ENCODE measurements at regions of chr12 and their contacts with region 1.

Region 1: DNA sequence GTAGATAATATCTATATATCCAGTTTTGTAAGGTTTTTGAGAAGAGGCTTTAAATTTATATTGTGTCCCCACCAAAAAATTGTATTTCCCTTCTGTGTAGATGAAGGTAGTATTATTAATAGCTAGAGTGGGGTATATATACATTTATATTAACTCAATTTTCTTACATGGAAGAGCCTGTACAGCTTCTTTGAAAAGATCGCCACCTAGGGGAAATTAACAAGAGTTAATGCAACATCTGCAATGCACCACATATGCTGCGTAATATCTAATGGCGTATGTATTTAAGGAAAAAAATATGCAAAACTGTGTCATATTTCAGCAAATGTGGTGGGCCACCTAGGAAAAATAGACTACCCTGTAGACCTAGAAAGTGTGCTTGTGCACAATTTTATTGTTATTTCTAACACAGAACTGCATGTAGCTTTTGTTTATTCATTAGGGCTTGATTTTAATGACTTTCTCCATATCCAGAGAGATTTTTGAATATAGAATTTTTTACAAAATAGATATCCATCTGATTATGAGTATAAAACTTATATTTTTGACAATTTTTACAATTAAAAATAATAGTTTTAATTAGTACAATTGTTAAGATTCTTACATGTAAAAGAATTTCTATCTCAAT is 14.0 kb downstream of the CCER1 start:
- DNase-seq: peak; percentile 75
- H3K4me3 ChIP-seq: no peak overlapping the region
- H3K27ac ChIP-seq: no peak overlapping the region
- H3K4me1 ChIP-seq: peaks cover 18% of the 10 kb centered on the region
- H3K27me3 ChIP-seq: no peaks in the 10 kb centered on the region
- CTCF ChIP-seq: peak; percentile 38 to 47
- POLR2A ChIP-seq: no peak

Region 2: DNA sequence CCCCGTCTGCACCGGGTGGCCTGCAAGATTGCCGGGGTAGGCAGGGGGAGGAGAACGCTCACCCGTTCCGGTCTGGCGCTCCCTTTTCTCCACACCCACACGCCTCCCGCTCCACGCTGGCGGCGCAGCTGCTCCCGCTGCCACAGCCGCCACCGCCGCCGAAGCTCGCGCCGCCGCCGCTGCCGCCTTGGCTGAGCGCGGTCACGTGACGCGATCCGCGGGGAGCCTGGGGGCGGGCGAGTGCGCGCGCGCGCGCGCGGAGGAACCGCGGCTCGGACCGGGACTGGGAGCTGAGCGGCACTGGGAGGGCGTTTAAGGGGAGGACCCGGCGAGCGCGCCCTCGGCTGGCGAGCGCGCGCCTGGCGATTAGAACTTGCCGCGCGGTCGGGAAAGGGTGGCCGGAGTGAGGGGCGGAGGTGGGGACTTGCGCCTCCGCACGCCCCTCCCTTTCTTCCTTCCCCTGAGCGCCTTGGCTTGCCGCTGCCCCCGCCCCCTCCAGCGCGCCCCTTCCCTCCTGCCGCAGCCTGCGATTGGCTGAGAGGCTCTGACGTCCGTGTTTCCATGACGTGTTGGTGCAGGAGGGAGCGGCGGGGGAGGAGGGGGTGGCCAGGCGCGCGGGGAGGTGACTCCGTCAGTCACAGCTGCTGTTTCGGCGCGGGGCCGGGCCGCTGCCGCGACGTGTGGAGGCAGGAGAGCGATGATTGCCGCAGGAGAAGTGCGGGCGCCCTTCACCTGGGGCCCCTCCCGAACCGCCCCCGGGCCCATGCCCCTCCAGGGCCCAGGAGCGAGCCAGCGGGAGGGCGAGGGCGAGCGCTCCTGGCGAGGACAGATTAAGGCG is 1231.6 kb before region 1 on chr12:
- CTCF ChIA-PET with region 1: interaction called, 5 read pairs
- POLR2A ChIA-PET with region 1: no interaction called
- dilution Hi-C with region 1: no loop called
- intact Hi-C with region 1: loop called (anchors 2 kb)
- DNase-seq: peak; percentile 99
- H3K4me3 ChIP-seq: peak overlapping the region; percentile 48 to 75 (median 73)
- H3K27ac ChIP-seq: peak overlapping the region; percentile 67
- H3K4me1 ChIP-seq: peaks cover 12% of the 10 kb centered on the region
- H3K27me3 ChIP-seq: peaks cover 0 to 16% of the 10 kb centered on the region in 2 experiments
- CTCF ChIP-seq: peak in 1 of 2 donors; percentile 16
- POLR2A ChIP-seq: no peak

Region 3: DNA sequence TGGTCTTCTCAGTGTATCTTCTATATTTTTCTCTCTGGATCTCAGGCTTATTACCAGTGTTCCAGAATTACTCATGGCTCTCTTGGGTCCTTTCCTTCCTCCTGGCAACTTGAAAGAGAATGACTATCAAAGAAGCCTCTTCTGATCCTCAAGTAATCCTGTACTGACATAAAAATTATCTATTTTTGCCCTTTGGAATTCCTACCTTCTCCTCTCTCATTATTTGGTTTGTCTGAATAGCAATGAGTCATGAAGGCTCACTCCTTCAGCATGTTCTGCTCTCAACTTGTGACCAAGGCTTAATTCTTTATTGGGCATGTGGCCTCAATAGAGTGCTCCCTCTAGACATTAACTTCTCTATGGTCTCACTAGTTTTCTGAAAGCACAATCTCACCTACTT is 678.7 kb before region 1 on chr12:
- CTCF ChIA-PET with region 1: no interaction called
- POLR2A ChIA-PET with region 1: no interaction called
- dilution Hi-C with region 1: no loop called
- intact Hi-C with region 1: no loop called
- DNase-seq: no peak
- H3K4me3 ChIP-seq: no peak overlapping the region
- H3K27ac ChIP-seq: no peak overlapping the region
- H3K4me1 ChIP-seq: no peaks in the 10 kb centered on the region
- H3K27me3 ChIP-seq: no peaks in the 10 kb centered on the region
- CTCF ChIP-seq: no peak
- POLR2A ChIP-seq: no peak

Region 4: DNA sequence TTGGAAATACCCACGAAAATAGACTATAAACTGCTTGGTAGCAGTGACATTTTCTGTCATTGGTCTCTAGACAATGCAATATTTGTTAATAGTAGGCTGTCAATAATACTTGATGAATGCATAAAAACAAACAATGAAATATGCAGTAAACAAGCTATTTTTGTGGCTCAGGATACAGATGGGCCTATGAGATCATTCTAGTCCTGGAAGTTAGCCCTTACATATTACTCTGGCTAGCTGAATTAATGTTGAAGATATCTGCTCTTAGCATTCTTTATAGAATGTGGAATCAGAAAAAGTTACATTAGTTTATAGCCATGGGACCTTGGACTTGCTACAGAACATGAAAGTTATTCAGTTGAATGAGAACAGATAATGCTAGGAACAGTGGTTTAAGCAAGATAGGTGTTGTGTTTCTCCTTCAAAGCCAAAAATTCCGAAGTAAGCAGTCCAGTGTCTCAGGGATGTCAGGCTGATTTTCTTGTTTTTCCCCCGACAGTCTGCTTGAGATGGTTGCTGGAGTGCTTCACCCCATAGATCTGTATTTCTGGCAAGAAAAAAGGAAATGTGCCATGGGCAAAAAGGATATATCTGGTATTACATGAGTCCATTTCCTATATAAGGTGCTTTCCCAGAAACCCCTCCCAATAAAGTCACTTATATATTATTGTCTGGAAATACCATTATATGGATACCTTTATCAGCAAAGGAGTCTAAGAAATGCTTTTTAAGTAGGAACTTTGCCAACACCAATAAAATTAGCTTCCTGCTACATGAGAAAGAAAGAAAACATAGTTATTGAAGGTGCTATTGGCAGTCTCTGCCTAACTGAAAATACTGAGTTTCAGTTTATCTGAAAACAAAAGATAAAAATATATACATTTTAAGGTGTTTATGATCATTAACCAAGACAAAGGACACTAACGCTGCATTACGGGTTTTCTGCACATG is 612.9 kb before region 1 on chr12:
- CTCF ChIA-PET with region 1: interaction called, 3 read pairs
- POLR2A ChIA-PET with region 1: no interaction called
- dilution Hi-C with region 1: no loop called
- intact Hi-C with region 1: loop called (anchors 5 kb)
- DNase-seq: peak; percentile 89
- H3K4me3 ChIP-seq: no peak overlapping the region
- H3K27ac ChIP-seq: peak overlapping the region; percentile 97
- H3K4me1 ChIP-seq: peaks cover 53% of the 10 kb centered on the region
- H3K27me3 ChIP-seq: no peaks in the 10 kb centered on the region
- CTCF ChIP-seq: no peak
- POLR2A ChIP-seq: no peak

Region 5: GRCh38 chr12:90741611-90742010 is 199.4 kb before region 1 on chr12:
- CTCF ChIA-PET with region 1: no interaction called
- POLR2A ChIA-PET with region 1: no interaction called
- dilution Hi-C with region 1: no loop called
- intact Hi-C with region 1: no loop called
- DNase-seq: no peak
- H3K4me3 ChIP-seq: no peak overlapping the region
- H3K27ac ChIP-seq: no peak overlapping the region
- H3K4me1 ChIP-seq: no peaks in the 10 kb centered on the region
- H3K27me3 ChIP-seq: no peaks in the 10 kb centered on the region
- CTCF ChIP-seq: no peak
- POLR2A ChIP-seq: no peak

Region 6: DNA sequence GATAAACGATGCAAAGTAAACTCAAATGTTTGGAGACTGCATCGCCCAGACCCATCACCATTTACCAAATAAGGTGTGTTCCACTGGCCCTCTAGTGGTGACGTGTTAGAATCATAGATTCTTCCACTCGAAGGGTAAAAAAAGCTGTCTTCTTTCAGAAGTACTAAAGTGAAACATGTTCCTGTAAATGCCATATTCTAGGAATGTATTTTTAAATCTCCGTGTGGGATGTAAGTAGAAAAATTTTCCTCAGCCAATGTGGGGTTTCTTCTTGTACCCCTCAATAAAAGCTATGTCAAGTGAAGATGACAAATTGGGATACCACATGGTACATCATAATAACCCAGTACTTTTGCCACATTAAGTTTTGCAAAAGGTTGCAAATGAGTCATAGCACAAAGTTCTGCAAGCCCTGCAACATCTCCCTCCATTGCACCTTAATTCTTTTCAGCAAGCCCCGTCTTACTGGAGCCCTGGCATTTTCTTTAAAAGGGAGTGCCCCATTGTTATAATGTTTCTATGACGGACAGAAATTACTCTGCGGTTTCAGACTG is 86.8 kb before region 1 on chr12:
- CTCF ChIA-PET with region 1: interaction called, 11 read pairs
- POLR2A ChIA-PET with region 1: no interaction called
- dilution Hi-C with region 1: no loop called
- intact Hi-C with region 1: no loop called
- DNase-seq: peak; percentile 60
- H3K4me3 ChIP-seq: no peak overlapping the region
- H3K27ac ChIP-seq: no peak overlapping the region
- H3K4me1 ChIP-seq: no peaks in the 10 kb centered on the region
- H3K27me3 ChIP-seq: no peaks in the 10 kb centered on the region
- CTCF ChIP-seq: peak; percentile 59 to 63
- POLR2A ChIP-seq: no peak

Region 7: DNA sequence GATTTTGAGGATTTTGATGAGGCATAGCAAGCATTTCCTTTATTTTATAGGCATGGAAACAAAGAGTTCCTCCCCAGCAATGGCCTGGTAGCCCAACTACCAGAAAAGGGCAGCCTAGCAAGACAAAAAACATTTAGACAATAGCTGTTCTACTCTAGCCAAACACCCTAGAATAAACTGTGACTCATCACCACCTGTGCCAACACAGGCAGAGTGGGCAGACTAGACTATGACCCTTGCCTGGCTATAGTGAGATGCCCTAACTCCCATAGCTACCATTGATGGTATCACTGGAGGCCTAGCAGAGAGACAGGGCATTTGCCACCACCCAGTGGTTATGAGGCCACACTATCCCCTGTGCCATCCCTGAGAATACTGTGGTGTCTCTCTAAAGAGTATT is 29.5 kb after region 1 on chr12:
- CTCF ChIA-PET with region 1: interaction called, 20 read pairs
- POLR2A ChIA-PET with region 1: no interaction called
- dilution Hi-C with region 1: no loop called
- intact Hi-C with region 1: no loop called
- DNase-seq: peak; percentile 84
- H3K4me3 ChIP-seq: no peak overlapping the region
- H3K27ac ChIP-seq: peak overlapping the region; percentile 4
- H3K4me1 ChIP-seq: peaks cover 11% of the 10 kb centered on the region
- H3K27me3 ChIP-seq: no peaks in the 10 kb centered on the region
- CTCF ChIP-seq: no peak
- POLR2A ChIP-seq: no peak

Region 8: DNA sequence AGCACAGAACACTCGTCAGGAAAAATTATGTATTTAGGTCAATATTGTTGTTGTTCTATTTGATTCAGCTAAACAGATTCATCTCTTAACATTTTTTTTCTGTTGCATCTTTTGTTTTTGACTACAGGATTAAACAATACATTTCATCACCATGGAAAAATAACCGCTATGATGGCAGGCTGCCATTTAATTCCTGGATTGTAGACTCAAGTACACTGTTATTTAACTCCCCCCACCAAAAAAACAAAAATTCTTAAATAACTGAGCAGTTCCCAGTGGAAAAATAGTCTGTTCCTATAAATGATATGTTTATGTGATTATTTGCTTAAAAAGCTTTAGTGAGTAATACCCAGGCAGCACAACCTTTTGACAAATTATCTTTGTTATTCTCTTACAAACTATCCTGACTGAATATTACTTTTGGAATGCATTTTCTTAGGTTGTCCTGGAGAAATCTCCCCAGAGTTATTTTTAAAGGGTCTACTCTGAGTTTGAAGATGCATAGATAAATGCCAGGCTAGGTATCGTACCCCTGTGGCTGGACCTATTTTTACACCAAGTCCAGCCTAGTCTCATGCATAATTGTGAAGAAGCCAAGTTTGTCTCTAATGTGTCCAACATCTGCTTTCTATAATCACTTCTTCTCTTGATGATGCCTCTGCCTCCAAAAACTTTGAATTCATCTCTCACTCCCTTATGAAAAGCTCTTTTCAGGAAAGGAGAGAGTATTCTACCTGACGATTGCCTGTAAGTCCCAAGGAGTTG is 113.1 kb after region 1 on chr12:
- CTCF ChIA-PET with region 1: no interaction called
- POLR2A ChIA-PET with region 1: no interaction called
- dilution Hi-C with region 1: no loop called
- intact Hi-C with region 1: no loop called
- DNase-seq: peak; percentile 94
- H3K4me3 ChIP-seq: no peak overlapping the region
- H3K27ac ChIP-seq: no peak overlapping the region
- H3K4me1 ChIP-seq: no peaks in the 10 kb centered on the region
- H3K27me3 ChIP-seq: no peaks in the 10 kb centered on the region
- CTCF ChIP-seq: no peak
- POLR2A ChIP-seq: no peak

Region 9: GRCh38 chr12:91332302-91332701 is 391.3 kb after region 1 on chr12:
- CTCF ChIA-PET with region 1: interaction called, 39 read pairs
- POLR2A ChIA-PET with region 1: no interaction called
- dilution Hi-C with region 1: no loop called
- intact Hi-C with region 1: no loop called
- DNase-seq: no peak
- H3K4me3 ChIP-seq: no peak overlapping the region
- H3K27ac ChIP-seq: no peak overlapping the region
- H3K4me1 ChIP-seq: no peaks in the 10 kb centered on the region
- H3K27me3 ChIP-seq: no peaks in the 10 kb centered on the region
- CTCF ChIP-seq: no peak
- POLR2A ChIP-seq: no peak

Measured in endothelial cell of umbilical vein (primary cell).